IMR-90 (cell line): ENCODE measurements at regions of chr1 and their contacts with region 1.

Region 1: DNA sequence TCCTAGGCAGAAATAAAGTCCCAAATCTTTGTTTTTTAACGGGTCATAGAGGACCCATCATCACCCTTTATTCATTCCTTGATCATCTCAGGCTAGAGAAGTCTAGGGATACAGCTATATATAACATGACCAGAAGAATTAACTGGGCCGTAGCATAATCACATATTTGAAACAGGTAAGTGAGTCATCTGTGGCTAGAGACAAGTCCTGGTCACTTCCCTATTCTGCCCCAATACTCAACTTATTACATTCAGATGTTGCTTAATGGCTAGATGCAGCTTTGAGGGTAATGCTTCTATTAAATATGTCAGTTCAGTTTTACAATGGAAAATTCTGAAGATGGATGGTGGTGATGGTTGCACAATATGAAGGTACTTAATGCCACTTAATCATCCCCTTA is 47.0 kb downstream of the EXO1 start:
- DNase-seq: no peak
- ATAC-seq: no peak
- H3K4me3 ChIP-seq: no peak overlapping the region
- H3K27ac ChIP-seq: no peak overlapping the region
- H3K4me1 ChIP-seq: no peaks in the 10 kb centered on the region
- H3K27me3 ChIP-seq: no peaks in the 10 kb centered on the region
- CTCF ChIP-seq: no peak
- POLR2A ChIP-seq: no peak
- RAD21 ChIP-seq: no peak

Region 2: GRCh38 chr1:241317676-241318075 is 577.3 kb before region 1 on chr1:
- CTCF ChIA-PET with region 1: no interaction called
- POLR2A ChIA-PET with region 1: no interaction called
- dilution Hi-C with region 1: no loop called
- in situ Hi-C with region 1: no loop called
- intact Hi-C with region 1: no loop called
- DNase-seq: no peak
- ATAC-seq: no peak
- H3K4me3 ChIP-seq: no peak overlapping the region
- H3K27ac ChIP-seq: no peak overlapping the region
- H3K4me1 ChIP-seq: no peaks in the 10 kb centered on the region
- H3K27me3 ChIP-seq: no peaks in the 10 kb centered on the region
- CTCF ChIP-seq: no peak
- POLR2A ChIP-seq: no peak
- RAD21 ChIP-seq: no peak

Region 3: GRCh38 chr1:241957695-241958494 is 62.9 kb after region 1 on chr1 and contains the start of gene BECN2:
- CTCF ChIA-PET with region 1: no interaction called
- POLR2A ChIA-PET with region 1: no interaction called
- dilution Hi-C with region 1: no loop called
- in situ Hi-C with region 1: no loop called
- intact Hi-C with region 1: no loop called
- DNase-seq: no peak
- ATAC-seq: no peak
- H3K4me3 ChIP-seq: no peak within 1 kb of the TSS
- H3K27ac ChIP-seq: no peak within 1 kb of the TSS
- H3K4me1 ChIP-seq: no peaks in the 10 kb centered on the region
- H3K27me3 ChIP-seq: no peaks in the 10 kb centered on the region
- CTCF ChIP-seq: no peak
- POLR2A ChIP-seq: no peak
- RAD21 ChIP-seq: no peak
- total RNA-seq, gene BECN2: not detected in 2 replicates

Region 4: DNA sequence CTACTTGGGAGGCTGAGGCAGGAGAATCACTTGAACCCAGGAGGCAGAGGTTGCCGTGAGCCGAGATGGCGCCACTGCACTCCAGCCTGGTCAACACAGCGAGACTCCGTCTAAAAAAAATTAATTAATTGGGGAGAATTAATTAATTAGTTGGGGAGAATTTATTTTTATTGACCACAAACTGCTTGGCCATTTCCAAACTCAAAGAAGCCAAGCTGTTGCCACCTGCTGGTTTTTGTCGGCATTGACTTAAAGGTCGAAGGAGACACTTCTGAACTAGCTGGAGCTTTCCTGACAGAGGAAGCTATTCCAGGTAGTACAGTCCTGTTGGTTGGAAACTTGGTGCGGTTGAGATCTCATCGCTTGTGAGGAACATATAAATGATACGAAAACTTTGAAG is 90.8 kb after region 1 on chr1:
- CTCF ChIA-PET with region 1: interaction called, 3 read pairs
- POLR2A ChIA-PET with region 1: no interaction called
- dilution Hi-C with region 1: no loop called
- in situ Hi-C with region 1: no loop called
- intact Hi-C with region 1: loop called (anchors 2 kb)
- DNase-seq: peak; percentile 34
- ATAC-seq: peak; percentile 61
- H3K4me3 ChIP-seq: no peak overlapping the region
- H3K27ac ChIP-seq: no peak overlapping the region
- H3K4me1 ChIP-seq: no peaks in the 10 kb centered on the region
- H3K27me3 ChIP-seq: no peaks in the 10 kb centered on the region
- CTCF ChIP-seq: peak; percentile 35
- POLR2A ChIP-seq: no peak
- RAD21 ChIP-seq: no peak

Region 5: GRCh38 chr1:241998412-241998921 is 103.5 kb after region 1 on chr1:
- CTCF ChIA-PET with region 1: interaction called, 3 read pairs
- POLR2A ChIA-PET with region 1: no interaction called
- dilution Hi-C with region 1: no loop called
- in situ Hi-C with region 1: no loop called
- intact Hi-C with region 1: loop called (anchors 1 kb)
- DNase-seq: peak; percentile 73
- ATAC-seq: peak; percentile 91
- H3K4me3 ChIP-seq: peak overlapping the region; percentile 40
- H3K27ac ChIP-seq: no peak overlapping the region
- H3K4me1 ChIP-seq: no peaks in the 10 kb centered on the region
- H3K27me3 ChIP-seq: no peaks in the 10 kb centered on the region
- CTCF ChIP-seq: peak; percentile 42
- POLR2A ChIP-seq: no peak
- RAD21 ChIP-seq: peak; percentile 10; the same call in 1 of the 2 replicates

Region 6: GRCh38 chr1:242017584-242018233 is 122.7 kb after region 1 on chr1:
- CTCF ChIA-PET with region 1: no interaction called
- POLR2A ChIA-PET with region 1: no interaction called
- dilution Hi-C with region 1: no loop called
- in situ Hi-C with region 1: no loop called
- intact Hi-C with region 1: loop called (anchors 1 kb)
- DNase-seq: peak; percentile 21
- ATAC-seq: peak; percentile 59; the same call in 1 of the 2 replicates
- H3K4me3 ChIP-seq: no peak overlapping the region
- H3K27ac ChIP-seq: no peak overlapping the region
- H3K4me1 ChIP-seq: no peaks in the 10 kb centered on the region
- H3K27me3 ChIP-seq: no peaks in the 10 kb centered on the region
- CTCF ChIP-seq: peak; percentile 38; the same call in 1 of the 2 replicates
- POLR2A ChIP-seq: no peak
- RAD21 ChIP-seq: peak; percentile 32